Sciatic nerve (tissue), 2 donors: ENCODE measurements at regions of chr4 and their contacts with region 1.

Region 1: GRCh38 chr4:38160487-38161207 is 200.4 kb downstream of the PTTG2 start:
- DNase-seq: no peak
- ATAC-seq: peak; percentile 92

Region 2: DNA sequence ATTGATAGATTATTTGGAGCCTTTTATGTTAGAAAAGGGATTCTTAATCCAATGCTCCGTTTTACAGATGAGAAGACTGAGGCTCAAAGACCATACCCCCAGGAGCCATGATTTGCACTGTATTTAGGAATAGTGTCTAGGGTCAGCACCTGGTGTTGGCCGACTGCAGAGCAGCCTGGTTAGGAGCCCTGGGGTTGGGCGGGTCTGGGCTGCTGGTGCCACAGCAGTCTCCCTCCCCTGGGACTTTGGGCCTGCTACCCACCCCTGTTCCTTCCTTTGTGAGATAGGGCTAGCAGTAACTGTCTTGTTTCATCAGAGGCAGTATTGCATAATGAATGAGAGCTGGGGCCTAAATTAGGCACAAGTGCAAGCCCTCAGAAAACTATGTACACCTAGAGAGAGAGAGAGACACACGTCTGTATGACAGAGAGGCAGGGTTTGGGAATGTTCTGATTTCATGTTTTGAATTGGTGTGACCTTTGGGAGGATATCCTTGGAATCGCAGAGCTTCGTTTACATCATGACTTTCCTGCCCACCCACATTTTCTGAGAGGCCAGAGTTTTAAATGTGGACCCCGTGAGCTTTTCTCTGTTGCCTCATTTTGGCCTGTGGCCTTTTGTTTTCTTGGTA is 88.7 kb before region 1 on chr4:
- intact Hi-C with region 1: loop called (anchors 5 kb)
- DNase-seq: no peak
- ATAC-seq: peak; percentile 72

Region 3: GRCh38 chr4:38141808-38142500 is 18.7 kb before region 1 on chr4:
- intact Hi-C with region 1: no loop called
- DNase-seq: no peak
- ATAC-seq: no peak